Naive thymus-derived CD4-positive, alpha-beta T cell (primary cell): ENCODE measurements at regions of chr9 and their contacts with region 1.

Region 1: DNA sequence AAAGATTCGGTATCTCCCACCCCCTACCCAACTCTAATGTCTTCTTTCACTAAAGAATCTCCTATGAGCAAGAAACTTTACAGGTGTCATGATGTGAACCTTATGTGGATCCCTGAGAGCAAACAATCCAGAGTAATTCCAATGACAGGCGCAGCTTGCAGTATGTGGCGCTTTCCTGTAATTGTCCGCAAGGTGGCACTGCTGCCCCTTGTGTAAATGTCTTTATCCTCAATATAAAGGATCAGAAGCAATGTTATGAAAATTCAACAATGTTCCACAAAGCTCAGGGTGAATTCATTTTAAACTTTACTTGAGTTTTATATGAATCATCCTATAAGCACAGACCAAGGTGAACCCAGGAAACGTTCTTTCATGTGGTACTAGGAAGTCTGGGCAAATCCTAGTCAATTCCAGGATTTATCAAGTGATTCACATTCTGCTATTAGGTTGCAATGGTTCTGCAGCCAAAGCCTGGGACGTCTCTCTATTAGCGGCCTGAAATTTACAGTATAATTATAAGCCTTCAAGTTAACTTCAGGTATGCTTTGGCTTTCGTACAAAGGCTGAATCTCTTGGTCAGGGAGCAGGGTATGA is 113.7 kb downstream of the TRPM6 start:
- DNase-seq: peak; percentile 26 to 67 (median 56)
- ATAC-seq: peak; percentile 83
- H3K4me3 ChIP-seq: no peak overlapping the region
- H3K4me3 Mint-ChIP-seq: no peak overlapping the region
- H3K27ac ChIP-seq: no peak overlapping the region
- H3K27ac Mint-ChIP-seq: no peak overlapping the region
- H3K4me1 ChIP-seq: no peaks in the 10 kb centered on the region
- H3K4me1 Mint-ChIP-seq: peaks cover 0 to 5% (median 0%) of the 10 kb centered on the region in 7 donors
- H3K27me3 ChIP-seq: no peaks in the 10 kb centered on the region
- H3K27me3 Mint-ChIP-seq: peaks cover 5 to 20% (median 18%) of the 10 kb centered on the region in 5 donors

Region 2: GRCh38 chr9:74711341-74711740 is 62.6 kb before region 1 on chr9:
- CTCF ChIA-PET with region 1: no interaction called
- POLR2A ChIA-PET with region 1: no interaction called
- intact Hi-C with region 1: no loop called
- DNase-seq: no peak
- ATAC-seq: no peak
- H3K4me3 ChIP-seq: no peak overlapping the region
- H3K4me3 Mint-ChIP-seq: no peak overlapping the region
- H3K27ac ChIP-seq: no peak overlapping the region
- H3K27ac Mint-ChIP-seq: no peak overlapping the region
- H3K4me1 ChIP-seq: no peaks in the 10 kb centered on the region
- H3K4me1 Mint-ChIP-seq: no peaks in the 10 kb centered on the region
- H3K27me3 ChIP-seq: no peaks in the 10 kb centered on the region
- H3K27me3 Mint-ChIP-seq: peaks cover 0 to 22% (median 21%) of the 10 kb centered on the region in 5 donors

Region 3: GRCh38 chr9:74824654-74825053 is 50.7 kb after region 1 on chr9:
- CTCF ChIA-PET with region 1: no interaction called
- POLR2A ChIA-PET with region 1: no interaction called
- intact Hi-C with region 1: no loop called
- DNase-seq: no peak
- ATAC-seq: no peak
- H3K4me3 ChIP-seq: no peak overlapping the region
- H3K4me3 Mint-ChIP-seq: no peak overlapping the region
- H3K27ac ChIP-seq: no peak overlapping the region
- H3K27ac Mint-ChIP-seq: no peak overlapping the region
- H3K4me1 ChIP-seq: no peaks in the 10 kb centered on the region
- H3K4me1 Mint-ChIP-seq: no peaks in the 10 kb centered on the region
- H3K27me3 ChIP-seq: no peaks in the 10 kb centered on the region
- H3K27me3 Mint-ChIP-seq: peaks cover 0 to 19% (median 7%) of the 10 kb centered on the region in 5 donors

Region 4: GRCh38 chr9:75001719-75002422 is 227.9 kb after region 1 on chr9:
- CTCF ChIA-PET with region 1: interaction called, 102 read pairs
- POLR2A ChIA-PET with region 1: no interaction called
- intact Hi-C with region 1: loop called (anchors 1 kb)
- DNase-seq: peak in 7 of 9 donors; percentile 52 to 77 (median 68)
- ATAC-seq: peak; percentile 98
- H3K4me3 ChIP-seq: no peak overlapping the region
- H3K4me3 Mint-ChIP-seq: no peak overlapping the region
- H3K27ac ChIP-seq: no peak overlapping the region
- H3K27ac Mint-ChIP-seq: no peak overlapping the region
- H3K4me1 ChIP-seq: peaks cover 0 to 4% of the 10 kb centered on the region in 2 donors
- H3K4me1 Mint-ChIP-seq: peaks cover 0 to 8% (median 5%) of the 10 kb centered on the region in 7 donors
- H3K27me3 ChIP-seq: no peaks in the 10 kb centered on the region
- H3K27me3 Mint-ChIP-seq: no peaks in the 10 kb centered on the region

Region 5: GRCh38 chr9:75071530-75072124 is 297.6 kb after region 1 on chr9:
- CTCF ChIA-PET with region 1: interaction called, 14 read pairs
- POLR2A ChIA-PET with region 1: no interaction called
- intact Hi-C with region 1: no loop called
- DNase-seq: peak in 7 of 9 donors; percentile 20 to 75 (median 35)
- ATAC-seq: peak; percentile 79
- H3K4me3 ChIP-seq: no peak overlapping the region
- H3K4me3 Mint-ChIP-seq: peak overlapping the region in 1 of 10 donors; percentile 13
- H3K27ac ChIP-seq: peak overlapping the region; percentile 25
- H3K27ac Mint-ChIP-seq: peak overlapping the region; percentile 26 to 96 (median 79)
- H3K4me1 ChIP-seq: peaks cover 8 to 10% of the 10 kb centered on the region in 2 donors
- H3K4me1 Mint-ChIP-seq: peaks cover 14 to 35% (median 21%) of the 10 kb centered on the region in 7 donors
- H3K27me3 ChIP-seq: no peaks in the 10 kb centered on the region
- H3K27me3 Mint-ChIP-seq: no peaks in the 10 kb centered on the region

Region 6: GRCh38 chr9:75148561-75148960 is 374.6 kb after region 1 on chr9:
- CTCF ChIA-PET with region 1: no interaction called
- POLR2A ChIA-PET with region 1: no interaction called
- intact Hi-C with region 1: loop called in 1 of 2 experiments (anchors 5 kb)
- DNase-seq: peak in 1 of 9 donors; percentile 32
- ATAC-seq: no peak
- H3K4me3 ChIP-seq: peak overlapping the region; percentile 5
- H3K4me3 Mint-ChIP-seq: peak overlapping the region in 9 of 10 donors; percentile 20 to 88 (median 82)
- H3K27ac ChIP-seq: peak overlapping the region; percentile 47
- H3K27ac Mint-ChIP-seq: peak overlapping the region; percentile 81 to 97 (median 86)
- H3K4me1 ChIP-seq: peaks cover 66 to 69% of the 10 kb centered on the region in 2 donors
- H3K4me1 Mint-ChIP-seq: peaks cover 47 to 96% (median 86%) of the 10 kb centered on the region in 7 donors
- H3K27me3 ChIP-seq: no peaks in the 10 kb centered on the region
- H3K27me3 Mint-ChIP-seq: no peaks in the 10 kb centered on the region

Region 7: GRCh38 chr9:75185585-75186170 is 411.7 kb after region 1 on chr9:
- CTCF ChIA-PET with region 1: interaction called, 3 read pairs
- POLR2A ChIA-PET with region 1: no interaction called
- intact Hi-C with region 1: loop called (anchors 5 kb)
- DNase-seq: peak in 7 of 9 donors; percentile 10 to 38 (median 25)
- ATAC-seq: peak; percentile 74
- H3K4me3 ChIP-seq: no peak overlapping the region
- H3K4me3 Mint-ChIP-seq: peak overlapping the region in 3 of 10 donors; percentile 20 to 36 (median 25)
- H3K27ac ChIP-seq: no peak overlapping the region
- H3K27ac Mint-ChIP-seq: peak overlapping the region in 2 of 9 donors; percentile 30 to 81
- H3K4me1 ChIP-seq: peaks cover 12 to 13% of the 10 kb centered on the region in 2 donors
- H3K4me1 Mint-ChIP-seq: peaks cover 8 to 32% (median 28%) of the 10 kb centered on the region in 7 donors
- H3K27me3 ChIP-seq: no peaks in the 10 kb centered on the region
- H3K27me3 Mint-ChIP-seq: no peaks in the 10 kb centered on the region

Region 8: GRCh38 chr9:75238311-75238978 is 464.5 kb after region 1 on chr9:
- CTCF ChIA-PET with region 1: interaction called, 3 read pairs
- POLR2A ChIA-PET with region 1: no interaction called
- intact Hi-C with region 1: loop called in 1 of 2 experiments (anchors 1 kb)
- DNase-seq: peak in 7 of 9 donors; percentile 20 to 67 (median 50)
- ATAC-seq: peak; percentile 88
- H3K4me3 ChIP-seq: no peak overlapping the region
- H3K4me3 Mint-ChIP-seq: no peak overlapping the region
- H3K27ac ChIP-seq: no peak overlapping the region
- H3K27ac Mint-ChIP-seq: no peak overlapping the region
- H3K4me1 ChIP-seq: no peaks in the 10 kb centered on the region
- H3K4me1 Mint-ChIP-seq: peaks cover 0 to 2% (median 0%) of the 10 kb centered on the region in 7 donors
- H3K27me3 ChIP-seq: no peaks in the 10 kb centered on the region
- H3K27me3 Mint-ChIP-seq: peaks cover 0 to 3% (median 0%) of the 10 kb centered on the region in 5 donors

Region 9: DNA sequence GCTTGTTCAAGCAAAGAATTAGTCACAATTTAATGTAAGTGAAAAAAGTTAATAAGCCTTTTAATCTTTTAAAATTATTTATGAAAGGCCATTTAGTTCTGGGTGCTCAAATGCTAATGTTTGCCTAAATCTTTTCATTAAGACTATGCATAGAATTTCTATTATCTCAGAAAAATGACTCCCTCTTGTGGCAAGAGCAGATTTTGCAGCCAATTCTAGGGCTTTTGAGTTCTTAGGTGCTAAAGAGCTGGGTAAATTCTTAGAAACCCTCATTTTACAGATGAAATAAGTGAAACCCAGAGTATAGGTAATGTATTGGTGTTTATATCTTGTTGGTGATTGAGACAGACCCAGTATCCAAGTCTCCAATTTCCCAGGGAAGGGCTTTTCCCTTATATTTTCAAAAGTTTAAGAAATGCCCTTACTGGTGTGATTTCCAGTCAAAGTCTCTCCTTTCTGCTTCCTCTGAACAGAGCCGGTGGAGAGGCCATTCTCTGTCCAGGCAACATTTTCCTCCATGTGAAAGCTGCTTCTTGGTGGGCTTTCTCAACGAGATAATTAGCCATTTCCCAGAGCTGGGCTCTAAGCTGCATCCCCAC is 1092.4 kb after region 1 on chr9:
- CTCF ChIA-PET with region 1: no interaction called
- POLR2A ChIA-PET with region 1: no interaction called
- intact Hi-C with region 1: loop called (anchors 2 to 5 kb)
- DNase-seq: peak in 6 of 9 donors; percentile 18 to 61 (median 52)
- ATAC-seq: peak; percentile 61
- H3K4me3 ChIP-seq: no peak overlapping the region
- H3K4me3 Mint-ChIP-seq: no peak overlapping the region
- H3K27ac ChIP-seq: no peak overlapping the region
- H3K27ac Mint-ChIP-seq: no peak overlapping the region
- H3K4me1 ChIP-seq: peaks cover 0 to 18% of the 10 kb centered on the region in 2 donors
- H3K4me1 Mint-ChIP-seq: peaks cover 0 to 33% (median 23%) of the 10 kb centered on the region in 7 donors
- H3K27me3 ChIP-seq: no peaks in the 10 kb centered on the region
- H3K27me3 Mint-ChIP-seq: peaks cover 0 to 4% (median 0%) of the 10 kb centered on the region in 5 donors